Ovary (tissue), 10 donors: ENCODE measurements at regions of chr11 and their contacts with region 1.

Region 1: GRCh38 chr11:68146704-68147474 is 25.7 kb upstream of the CHKA start:
- DNase-seq: no peak
- H3K4me3 ChIP-seq: no peak overlapping the region
- H3K27ac ChIP-seq: no peak overlapping the region
- H3K4me1 ChIP-seq: peaks cover 10% of the 10 kb centered on the region
- H3K27me3 ChIP-seq: no peaks in the 10 kb centered on the region
- CTCF ChIP-seq: no peak
- EP300 ChIP-seq: no peak
- POLR2A ChIP-seq: no peak

Region 2: DNA sequence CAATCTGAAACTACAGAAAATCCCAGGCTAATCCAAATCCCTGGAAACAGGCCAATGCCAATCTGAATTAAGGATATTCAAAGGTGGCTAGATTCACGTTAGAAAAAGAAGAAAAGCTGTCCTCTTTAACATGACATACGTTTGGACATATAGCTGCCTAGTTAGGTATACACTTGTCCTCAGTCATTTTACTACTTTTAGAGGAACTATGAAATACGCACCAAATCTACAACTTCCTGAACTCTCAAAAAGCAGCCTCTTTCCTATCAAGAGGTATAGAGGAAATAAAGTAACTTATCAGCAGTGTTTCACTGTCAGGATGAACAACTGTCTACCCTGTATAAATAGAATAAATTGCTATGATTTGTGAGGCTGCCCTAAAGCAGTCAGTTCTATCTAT is 42.2 kb after region 1 on chr11:
- intact Hi-C with region 1: loop called in 1 of 4 experiments (anchors 5 kb)
- DNase-seq: no peak
- H3K4me3 ChIP-seq: no peak overlapping the region
- H3K27ac ChIP-seq: no peak overlapping the region
- H3K4me1 ChIP-seq: peaks cover 10% of the 10 kb centered on the region
- H3K27me3 ChIP-seq: no peaks in the 10 kb centered on the region
- CTCF ChIP-seq: no peak
- EP300 ChIP-seq: no peak
- POLR2A ChIP-seq: no peak